Activated B cell treated with CpG ODN at 0.5 μM for 24 hours (primary cell): ENCODE measurements at regions of chr12 and their contacts with region 1.

Region 1: GRCh38 chr12:49740930-49741881 is at the start of gene TMBIM6:
- DNase-seq: peak; percentile 92
- ATAC-seq: peak; percentile 91
- H3K4me3 Mint-ChIP-seq: peak within 1 kb of the TSS; percentile 95
- H3K27ac Mint-ChIP-seq: peak within 1 kb of the TSS; percentile 98
- H3K4me1 Mint-ChIP-seq: peaks cover 49% of the 10 kb centered on the region
- H3K27me3 Mint-ChIP-seq: no peaks in the 10 kb centered on the region
- CTCF ChIP-seq: no peak
- total RNA-seq, gene TMBIM6: 355 and 366 TPM in 2 replicates

Region 2: GRCh38 chr12:49388682-49389386 is 352.4 kb before region 1 on chr12:
- CTCF ChIA-PET with region 1: no interaction called
- POLR2A ChIA-PET with region 1: no interaction called
- intact Hi-C with region 1: no loop called
- DNase-seq: peak; percentile 49
- ATAC-seq: peak; percentile 94
- H3K4me3 Mint-ChIP-seq: peak overlapping the region; percentile 50
- H3K27ac Mint-ChIP-seq: no peak overlapping the region
- H3K4me1 Mint-ChIP-seq: peaks cover 4% of the 10 kb centered on the region
- H3K27me3 Mint-ChIP-seq: no peaks in the 10 kb centered on the region
- CTCF ChIP-seq: no peak

Region 3: DNA sequence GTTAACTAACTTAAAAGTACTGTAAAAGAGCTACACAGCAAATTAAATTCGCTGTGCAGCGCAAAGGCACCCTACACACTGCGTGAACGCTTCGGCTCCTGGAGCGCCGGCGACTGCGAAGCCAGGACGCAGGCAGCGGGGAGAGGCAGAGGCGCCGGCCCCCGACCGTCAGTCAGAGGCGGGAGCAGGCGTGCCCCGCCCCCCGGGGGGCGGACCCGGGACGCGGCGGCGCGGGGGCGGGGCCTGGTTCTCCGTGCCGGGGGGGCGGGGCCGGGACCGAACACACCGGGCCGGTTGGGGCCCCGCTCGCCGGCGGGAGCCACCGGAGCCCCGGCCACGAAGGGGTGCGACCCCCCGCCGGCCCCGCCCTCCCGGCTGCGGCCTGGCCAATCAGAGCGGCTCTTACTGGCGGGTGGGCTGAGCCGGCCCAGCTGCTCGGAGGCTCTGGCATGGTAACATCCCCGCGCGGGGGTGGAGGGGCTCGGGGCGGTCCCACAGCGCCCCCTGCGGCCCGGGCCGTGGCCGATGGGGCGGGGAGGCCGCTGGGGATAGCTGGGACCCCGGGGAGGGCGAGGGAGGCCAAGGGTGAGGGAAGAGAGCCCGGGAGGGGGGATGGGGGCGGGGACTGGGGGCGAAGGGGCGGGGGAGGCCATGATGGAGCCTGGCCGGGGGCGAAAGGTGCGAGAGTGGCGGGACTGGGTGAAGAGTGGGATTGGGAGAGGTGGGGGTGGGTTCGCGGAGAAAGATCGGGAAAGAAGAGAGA is 117.9 kb before region 1 on chr12 and contains the start of gene PRPF40B:
- CTCF ChIA-PET with region 1: interaction called, 3 read pairs
- POLR2A ChIA-PET with region 1: interaction called, 23 read pairs
- intact Hi-C with region 1: loop called (anchors 1 kb)
- DNase-seq: peak; percentile 89
- ATAC-seq: peak; percentile 79
- H3K4me3 Mint-ChIP-seq: peak within 1 kb of the TSS; percentile 88
- H3K27ac Mint-ChIP-seq: peak within 1 kb of the TSS; percentile 86
- H3K4me1 Mint-ChIP-seq: peaks cover 25% of the 10 kb centered on the region
- H3K27me3 Mint-ChIP-seq: no peaks in the 10 kb centered on the region
- CTCF ChIP-seq: no peak
- total RNA-seq, gene PRPF40B: 16.4 and 23.4 TPM in 2 replicates

Region 4: GRCh38 chr12:49673446-49674317 is 67.5 kb before region 1 on chr12:
- CTCF ChIA-PET with region 1: no interaction called
- POLR2A ChIA-PET with region 1: interaction called, 11 read pairs
- intact Hi-C with region 1: no loop called
- DNase-seq: no peak
- ATAC-seq: no peak
- H3K4me3 Mint-ChIP-seq: peak overlapping the region; percentile 52
- H3K27ac Mint-ChIP-seq: peak overlapping the region; percentile 95
- H3K4me1 Mint-ChIP-seq: peaks cover 85% of the 10 kb centered on the region
- H3K27me3 Mint-ChIP-seq: no peaks in the 10 kb centered on the region
- CTCF ChIP-seq: no peak

Region 5: DNA sequence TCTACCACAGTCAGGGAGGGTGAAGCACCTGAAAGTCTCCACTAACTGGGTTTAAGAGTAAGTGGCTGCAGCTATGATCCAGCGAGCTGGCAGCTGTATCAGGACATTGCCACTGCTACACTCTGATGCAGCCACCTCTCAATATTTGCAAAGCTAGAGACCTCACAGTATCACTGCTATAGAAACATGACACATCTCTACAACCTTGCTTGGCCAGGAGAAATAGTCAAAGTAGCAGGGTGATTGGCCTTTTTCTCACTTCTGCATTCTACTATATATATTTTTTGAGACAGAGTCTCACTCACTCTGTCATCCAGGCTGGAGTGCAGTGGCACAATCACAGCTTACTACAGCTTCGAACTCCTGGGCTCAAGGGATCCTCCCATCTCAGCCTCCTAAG is 24.7 kb before region 1 on chr12:
- CTCF ChIA-PET with region 1: interaction called, 7 read pairs
- POLR2A ChIA-PET with region 1: interaction called, 22 read pairs
- intact Hi-C with region 1: loop called (anchors 1 kb)
- DNase-seq: no peak
- ATAC-seq: peak; percentile 94
- H3K4me3 Mint-ChIP-seq: no peak overlapping the region
- H3K27ac Mint-ChIP-seq: no peak overlapping the region
- H3K4me1 Mint-ChIP-seq: peaks cover 4% of the 10 kb centered on the region
- H3K27me3 Mint-ChIP-seq: peaks cover 4% of the 10 kb centered on the region
- CTCF ChIP-seq: no peak

Region 6: DNA sequence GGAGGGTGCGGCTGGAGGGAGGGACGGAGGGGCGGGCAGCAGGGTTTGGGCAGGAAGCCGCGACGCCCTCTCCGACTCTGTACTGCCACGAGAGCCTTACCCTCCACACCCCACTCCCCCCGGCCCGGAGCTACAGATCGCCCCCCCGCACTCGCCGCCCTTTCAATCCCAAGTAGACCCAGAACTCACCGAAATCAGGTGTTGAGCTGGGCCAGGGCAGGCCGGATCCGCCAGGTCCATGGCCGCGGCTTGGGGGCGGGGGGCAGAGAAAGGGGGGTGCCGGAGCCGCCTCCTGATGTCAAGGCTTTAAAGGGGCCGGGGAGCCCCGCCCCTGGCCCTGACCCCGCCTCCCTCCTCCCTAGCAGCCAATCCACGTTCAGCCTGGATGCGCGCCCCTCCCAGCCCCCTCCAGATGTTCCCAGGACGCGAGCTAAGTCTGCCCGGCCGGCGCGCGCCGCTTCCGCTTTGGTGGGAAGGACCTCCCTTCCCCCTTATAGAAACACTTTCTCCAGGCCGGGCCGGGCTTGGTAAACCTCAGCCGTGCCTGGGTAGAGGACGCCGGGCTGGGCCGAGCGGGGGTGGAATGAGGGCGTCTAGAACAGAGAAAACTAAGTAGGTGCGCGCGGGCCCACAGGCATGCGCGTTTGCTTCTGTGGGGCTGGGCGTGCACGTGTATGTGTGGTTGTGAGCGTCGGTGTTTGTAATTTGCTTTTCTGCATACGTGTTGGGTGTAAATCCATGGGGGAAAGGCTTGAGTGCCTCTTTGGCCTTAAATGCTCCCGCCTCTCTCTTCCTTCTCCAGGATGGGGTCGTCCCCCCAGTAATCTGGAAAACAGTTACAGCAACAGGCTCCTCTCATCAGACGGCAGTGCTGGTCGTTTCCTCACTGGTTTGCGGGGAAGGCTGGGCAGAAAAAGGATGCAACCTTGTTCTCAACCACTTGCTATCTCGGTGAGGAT is 87.2 kb after region 1 on chr12 and contains the start of gene NCKAP5L:
- CTCF ChIA-PET with region 1: interaction called, 3 read pairs
- POLR2A ChIA-PET with region 1: interaction called, 28 read pairs
- intact Hi-C with region 1: loop called (anchors 1 kb)
- DNase-seq: peak; percentile 87
- ATAC-seq: peak; percentile 97
- H3K4me3 Mint-ChIP-seq: peak within 1 kb of the TSS; percentile 98
- H3K27ac Mint-ChIP-seq: peak within 1 kb of the TSS; percentile 95
- H3K4me1 Mint-ChIP-seq: peaks cover 37% of the 10 kb centered on the region
- H3K27me3 Mint-ChIP-seq: no peaks in the 10 kb centered on the region
- CTCF ChIP-seq: no peak
- total RNA-seq, gene NCKAP5L: 7.2 and 9.1 TPM in 2 replicates

Region 7: DNA sequence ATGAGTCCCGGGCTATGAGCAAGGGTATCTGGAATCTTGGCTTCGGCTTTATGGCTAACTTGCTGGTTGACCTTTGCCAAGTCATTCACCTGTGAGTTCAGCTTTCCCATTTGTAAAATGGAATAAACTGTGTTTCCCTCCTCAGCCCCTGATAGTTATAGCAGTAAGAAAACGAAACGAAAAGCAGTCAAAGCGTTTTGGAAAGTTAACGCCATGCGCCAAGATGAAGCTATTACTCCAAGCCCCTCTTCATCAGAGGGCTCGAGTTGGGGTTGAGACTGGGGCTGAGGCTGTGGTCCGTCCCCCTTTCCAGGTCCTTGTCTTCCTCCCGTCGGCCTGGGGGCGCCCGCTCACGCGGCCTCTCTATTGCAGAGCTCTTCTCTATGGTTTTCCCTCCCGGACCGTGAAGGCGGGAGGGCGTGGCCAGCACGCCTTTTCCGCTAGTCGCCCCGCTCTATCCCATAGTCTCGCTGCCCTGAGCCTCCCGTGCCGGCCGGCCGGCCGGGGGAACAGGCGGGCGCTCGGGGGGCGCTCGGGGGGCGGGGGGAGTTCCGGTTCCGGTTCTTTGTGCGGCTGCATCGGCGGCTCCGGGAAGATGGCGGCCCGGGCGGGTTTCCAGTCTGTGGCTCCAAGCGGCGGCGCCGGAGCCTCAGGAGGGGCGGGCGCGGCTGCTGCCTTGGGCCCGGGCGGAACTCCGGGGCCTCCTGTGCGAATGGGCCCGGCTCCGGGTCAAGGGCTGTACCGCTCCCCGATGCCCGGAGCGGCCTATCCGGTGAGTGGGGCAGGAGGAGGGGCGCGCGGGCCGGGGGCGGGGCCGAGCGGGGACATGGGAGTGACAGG is 343.8 kb after region 1 on chr12 and contains the start of gene SMARCD1:
- CTCF ChIA-PET with region 1: no interaction called
- POLR2A ChIA-PET with region 1: interaction called, 11 read pairs
- intact Hi-C with region 1: no loop called
- DNase-seq: peak; percentile 82
- ATAC-seq: peak; percentile 86
- H3K4me3 Mint-ChIP-seq: peak within 1 kb of the TSS; percentile 94
- H3K27ac Mint-ChIP-seq: peak within 1 kb of the TSS; percentile 97
- H3K4me1 Mint-ChIP-seq: peaks cover 35% of the 10 kb centered on the region
- H3K27me3 Mint-ChIP-seq: no peaks in the 10 kb centered on the region
- CTCF ChIP-seq: no peak
- total RNA-seq, gene SMARCD1: 101 and 108 TPM in 2 replicates